ENCODE measurements at regions of chr14 and their contacts with region 1.

Region 1: GRCh38 chr14:75333606-75334548 is 55.2 kb downstream of the FOS start:
- DNase-seq: peak; percentile 74
- H3K4me3 Mint-ChIP-seq: peak overlapping the region; percentile 58
- H3K27ac Mint-ChIP-seq: peak overlapping the region; percentile 80
- H3K4me1 Mint-ChIP-seq: peaks cover 26% of the 10 kb centered on the region
- H3K27me3 Mint-ChIP-seq: no peaks in the 10 kb centered on the region

Region 2: GRCh38 chr14:75011356-75011994 is 322.4 kb before region 1 on chr14:
- CTCF ChIA-PET with region 1: no interaction called
- intact Hi-C with region 1: no loop called
- DNase-seq: no peak
- H3K4me3 Mint-ChIP-seq: no peak overlapping the region
- H3K27ac Mint-ChIP-seq: peak overlapping the region; percentile 33
- H3K4me1 Mint-ChIP-seq: peaks cover 16% of the 10 kb centered on the region
- H3K27me3 Mint-ChIP-seq: no peaks in the 10 kb centered on the region

Region 3: GRCh38 chr14:75422169-75422568 is 88.3 kb after region 1 on chr14:
- CTCF ChIA-PET with region 1: no interaction called
- intact Hi-C with region 1: loop called (anchors 1 kb)
- DNase-seq: peak; percentile 63
- H3K4me3 Mint-ChIP-seq: no peak overlapping the region
- H3K27ac Mint-ChIP-seq: no peak overlapping the region
- H3K4me1 Mint-ChIP-seq: peaks cover 31% of the 10 kb centered on the region
- H3K27me3 Mint-ChIP-seq: peaks cover 8% of the 10 kb centered on the region

Measured in activated naive CD4-positive, alpha-beta T cell treated with anti-CD3 and anti-CD28 coated beads for 36 hours (primary cell).